CD14-positive monocyte (primary cell): ENCODE measurements at regions of chr9 and their contacts with region 1.

Region 1: GRCh38 chr9:122453677-122454135 is 24.0 kb downstream of the OR1J1 start:
- DNase-seq: no peak
- H3K4me3 ChIP-seq: no peak overlapping the region
- H3K4me3 Mint-ChIP-seq: no peak overlapping the region
- H3K27ac ChIP-seq: no peak overlapping the region
- H3K27ac Mint-ChIP-seq: no peak overlapping the region
- H3K4me1 ChIP-seq: no peaks in the 10 kb centered on the region
- H3K4me1 Mint-ChIP-seq: no peaks in the 10 kb centered on the region
- H3K27me3 ChIP-seq: no peaks in the 10 kb centered on the region
- H3K27me3 Mint-ChIP-seq: peaks cover 2 to 13% (median 3%) of the 10 kb centered on the region in 3 donors
- CTCF ChIP-seq: no peak

Region 2: GRCh38 chr9:122065923-122066629 is 387.6 kb before region 1 on chr9:
- intact Hi-C with region 1: no loop called
- DNase-seq: no peak
- H3K4me3 ChIP-seq: no peak overlapping the region
- H3K4me3 Mint-ChIP-seq: no peak overlapping the region
- H3K27ac ChIP-seq: peak overlapping the region in 1 of 2 donors; percentile 44
- H3K27ac Mint-ChIP-seq: peak overlapping the region in 1 of 7 donors; percentile 80
- H3K4me1 ChIP-seq: no peaks in the 10 kb centered on the region
- H3K4me1 Mint-ChIP-seq: peaks cover 6% of the 10 kb centered on the region
- H3K27me3 ChIP-seq: no peaks in the 10 kb centered on the region
- H3K27me3 Mint-ChIP-seq: peaks cover 0 to 2% (median 0%) of the 10 kb centered on the region in 3 donors
- CTCF ChIP-seq: no peak

Region 3: GRCh38 chr9:122125158-122125508 is 328.6 kb before region 1 on chr9:
- intact Hi-C with region 1: loop called (anchors 5 to 10 kb)
- DNase-seq: peak; percentile 56 to 66 (median 66)
- H3K4me3 ChIP-seq: no peak overlapping the region
- H3K4me3 Mint-ChIP-seq: peak overlapping the region in 1 of 2 donors; percentile 86
- H3K27ac ChIP-seq: no peak overlapping the region
- H3K27ac Mint-ChIP-seq: no peak overlapping the region
- H3K4me1 ChIP-seq: peaks cover 4 to 9% of the 10 kb centered on the region in 2 donors
- H3K4me1 Mint-ChIP-seq: peaks cover 12% of the 10 kb centered on the region
- H3K27me3 ChIP-seq: peaks cover 18 to 30% of the 10 kb centered on the region in 2 donors
- H3K27me3 Mint-ChIP-seq: peaks cover 38 to 43% (median 41%) of the 10 kb centered on the region in 3 donors
- CTCF ChIP-seq: peak; percentile 88

Region 4: GRCh38 chr9:122370869-122371755 is 82.6 kb before region 1 on chr9 and contains the start of gene PTGS1:
- intact Hi-C with region 1: loop called in 1 of 2 experiments (anchors 10 kb)
- DNase-seq: peak; percentile 39 to 59 (median 54)
- H3K4me3 ChIP-seq: peak within 1 kb of the TSS; percentile 77 to 95 (median 87)
- H3K4me3 Mint-ChIP-seq: peak within 1 kb of the TSS; percentile 85 to 94
- H3K27ac ChIP-seq: peak within 1 kb of the TSS; percentile 78 to 94
- H3K27ac Mint-ChIP-seq: peak within 1 kb of the TSS; percentile 84 to 95 (median 92)
- H3K4me1 ChIP-seq: peaks cover 37 to 46% of the 10 kb centered on the region in 2 donors
- H3K4me1 Mint-ChIP-seq: peaks cover 50% of the 10 kb centered on the region
- H3K27me3 ChIP-seq: no peaks in the 10 kb centered on the region
- H3K27me3 Mint-ChIP-seq: peaks cover 0 to 7% (median 1%) of the 10 kb centered on the region in 3 donors
- CTCF ChIP-seq: no peak
- polyA plus RNA-seq, gene PTGS1: 17.9 to 27.8 (median 20.5) TPM

Region 5: DNA sequence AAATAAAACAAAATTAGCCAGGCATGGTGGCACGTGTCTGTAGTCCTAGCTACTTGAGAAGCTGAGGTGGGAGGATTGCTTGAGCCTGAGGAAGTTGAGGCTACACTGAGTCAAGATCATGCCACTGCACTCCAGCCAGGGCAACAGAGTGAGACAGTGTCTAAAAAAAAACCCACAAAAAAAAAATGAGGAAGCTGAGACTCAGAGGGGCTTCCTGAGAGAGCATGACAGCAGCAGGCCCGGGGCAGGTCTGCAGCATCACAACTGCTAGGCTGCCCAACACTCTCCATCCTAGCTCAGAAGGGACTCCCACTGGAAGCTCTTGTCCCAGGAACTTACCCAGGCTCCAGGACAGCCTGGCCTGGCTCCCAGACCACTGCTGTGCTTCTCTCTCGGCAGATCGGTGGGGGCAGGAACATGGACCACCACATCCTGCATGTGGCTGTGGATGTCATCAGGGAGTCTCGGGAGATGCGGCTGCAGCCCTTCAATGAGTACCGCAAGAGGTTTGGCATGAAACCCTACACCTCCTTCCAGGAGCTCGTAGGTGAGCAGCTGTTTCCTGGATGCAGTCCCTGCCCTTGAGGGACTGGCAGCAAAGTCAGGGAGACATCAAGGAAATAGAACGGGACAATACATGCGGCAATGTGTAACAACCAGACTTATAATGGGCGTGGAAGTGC is 63.8 kb before region 1 on chr9:
- intact Hi-C with region 1: no loop called
- DNase-seq: peak in 2 of 3 donors; percentile 32 to 74
- H3K4me3 ChIP-seq: no peak overlapping the region
- H3K4me3 Mint-ChIP-seq: peak overlapping the region in 1 of 2 donors; percentile 46
- H3K27ac ChIP-seq: peak overlapping the region in 1 of 2 donors; percentile 47
- H3K27ac Mint-ChIP-seq: peak overlapping the region in 5 of 7 donors; percentile 43 to 85 (median 68)
- H3K4me1 ChIP-seq: peaks cover 13% of the 10 kb centered on the region in 2 donors
- H3K4me1 Mint-ChIP-seq: peaks cover 15% of the 10 kb centered on the region
- H3K27me3 ChIP-seq: no peaks in the 10 kb centered on the region
- H3K27me3 Mint-ChIP-seq: peaks cover 0 to 2% (median 1%) of the 10 kb centered on the region in 3 donors
- CTCF ChIP-seq: no peak